Naive thymus-derived CD8-positive, alpha-beta T cell (primary cell): ENCODE measurements at regions of chr1 and their contacts with region 1.

Region 1: DNA sequence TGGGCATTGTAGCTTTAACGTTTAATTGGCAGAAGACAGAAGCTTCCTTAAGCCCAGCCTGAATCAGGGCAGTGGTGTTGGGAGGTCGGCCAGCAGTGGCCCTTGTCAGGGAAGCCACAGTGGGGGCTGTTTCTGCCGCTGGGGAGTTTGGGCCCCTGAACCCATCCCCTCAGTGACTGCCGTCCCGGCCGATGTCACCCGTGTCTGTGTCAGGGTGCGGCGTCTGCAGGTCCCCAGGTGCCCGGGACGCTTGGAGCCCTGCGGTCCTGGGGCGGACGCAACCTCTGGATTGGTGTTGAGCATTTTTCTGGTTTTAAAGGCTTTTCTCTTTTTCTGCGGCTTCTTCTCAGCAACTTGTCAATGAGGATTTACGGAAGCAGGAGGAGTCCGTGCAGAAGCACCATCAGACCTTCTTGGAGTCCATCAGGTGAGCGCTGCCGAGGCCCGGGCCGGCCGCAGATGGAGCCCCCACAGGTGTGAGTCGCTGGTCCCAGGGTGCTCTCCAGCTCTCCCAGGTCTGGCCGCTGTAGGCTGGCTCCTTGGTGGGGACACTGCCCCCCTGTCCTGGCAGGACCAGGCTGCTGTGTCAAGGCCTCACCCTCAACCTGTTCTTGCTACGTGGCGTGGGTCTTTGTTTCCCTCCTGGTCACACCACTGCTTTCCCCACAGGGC is 2.3 kb downstream of the ATAD3C start:
- DNase-seq: peak in 1 of 10 donors; percentile 24
- ATAC-seq: no peak
- H3K4me3 Mint-ChIP-seq: no peak overlapping the region
- H3K27ac Mint-ChIP-seq: no peak overlapping the region
- H3K4me1 Mint-ChIP-seq: no peaks in the 10 kb centered on the region
- H3K27me3 Mint-ChIP-seq: peaks cover 0 to 4% (median 0%) of the 10 kb centered on the region in 5 donors

Region 2: GRCh38 chr1:1358433-1359261 is 93.2 kb before region 1 on chr1 and contains the start of gene MXRA8:
- POLR2A ChIA-PET with region 1: interaction called, 11 read pairs
- DNase-seq: peak in 1 of 10 donors; percentile 7
- ATAC-seq: peak; percentile 21 to 29
- H3K4me3 Mint-ChIP-seq: peak within 1 kb of the TSS; percentile 34 to 82 (median 78)
- H3K27ac Mint-ChIP-seq: peak within 1 kb of the TSS; percentile 70 to 94 (median 88)
- H3K4me1 Mint-ChIP-seq: peaks cover 13 to 39% (median 31%) of the 10 kb centered on the region in 4 donors
- H3K27me3 Mint-ChIP-seq: peaks cover 0 to 8% (median 0%) of the 10 kb centered on the region in 5 donors
- polyA plus RNA-seq, gene MXRA8: 7.4 to 22.0 (median 19.7) TPM

Region 3: GRCh38 chr1:1517973-1518620 is 66.3 kb after region 1 on chr1:
- POLR2A ChIA-PET with region 1: no interaction called
- DNase-seq: no peak
- ATAC-seq: no peak
- H3K4me3 Mint-ChIP-seq: no peak overlapping the region
- H3K27ac Mint-ChIP-seq: no peak overlapping the region
- H3K4me1 Mint-ChIP-seq: peaks cover 3 to 7% (median 5%) of the 10 kb centered on the region in 4 donors
- H3K27me3 Mint-ChIP-seq: no peaks in the 10 kb centered on the region

Region 4: DNA sequence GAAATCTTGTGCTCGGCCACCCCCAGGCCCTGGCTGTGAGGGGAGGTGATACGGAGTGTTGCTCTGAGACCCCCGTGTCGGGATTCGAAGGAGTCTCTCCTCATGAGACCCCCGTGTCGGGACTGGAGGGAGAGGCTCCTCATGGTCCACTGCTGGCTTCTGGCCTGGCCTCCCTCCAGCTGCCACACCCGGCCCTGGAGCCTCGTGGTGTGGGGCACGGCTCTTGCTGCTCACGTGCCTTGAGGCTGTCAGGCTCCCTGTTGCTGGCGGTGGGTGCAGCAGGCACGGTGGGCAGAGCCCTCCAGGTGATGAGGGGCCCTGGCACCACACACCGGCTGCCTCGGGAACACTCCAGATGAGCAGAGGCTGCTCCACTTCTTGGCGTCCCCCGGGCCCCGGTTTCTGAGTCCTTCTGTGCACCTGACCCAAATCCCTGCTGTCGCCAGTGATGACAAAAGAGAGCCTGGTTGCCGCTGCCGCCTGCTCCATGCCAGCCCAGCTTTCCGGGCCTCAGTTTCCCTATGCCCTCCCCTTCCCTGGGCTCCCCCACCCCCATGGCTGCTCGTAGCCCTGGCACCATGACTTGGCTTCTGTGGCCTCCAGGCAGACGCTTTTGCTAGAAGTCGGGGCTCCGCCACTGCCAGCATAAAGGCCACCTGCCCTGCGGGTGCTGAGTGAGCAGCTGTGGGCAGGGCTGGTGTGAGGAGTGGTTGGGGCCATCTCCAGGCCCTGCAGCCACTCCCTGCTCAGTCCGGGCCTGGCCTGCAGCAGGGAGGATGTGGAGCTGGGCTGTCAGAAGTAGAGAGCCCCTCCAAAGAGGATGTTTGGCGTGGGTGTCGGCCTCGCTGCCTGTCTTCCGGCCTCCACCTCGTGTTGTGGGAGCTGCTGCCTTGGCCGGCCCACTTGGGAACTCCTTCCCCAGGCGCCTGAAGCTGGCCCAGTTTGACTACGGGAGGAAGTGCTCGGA is 76.8 kb after region 1 on chr1:
- POLR2A ChIA-PET with region 1: no interaction called
- DNase-seq: no peak
- ATAC-seq: no peak
- H3K4me3 Mint-ChIP-seq: no peak overlapping the region
- H3K27ac Mint-ChIP-seq: no peak overlapping the region
- H3K4me1 Mint-ChIP-seq: no peaks in the 10 kb centered on the region
- H3K27me3 Mint-ChIP-seq: no peaks in the 10 kb centered on the region